CD8-positive, alpha-beta T cell (primary cell): ENCODE measurements at regions of chr10 and their contacts with region 1.

Region 1: GRCh38 chr10:32308027-32308603 is 38.8 kb downstream of the EPC1 start:
- DNase-seq: peak in 2 of 9 experiments; percentile 28 to 35
- ATAC-seq: peak; percentile 46
- H3K4me3 ChIP-seq: no peak overlapping the region
- H3K4me3 Mint-ChIP-seq: peak overlapping the region; percentile 2
- H3K27ac ChIP-seq: peak overlapping the region in 1 of 2 experiments; percentile 15
- H3K27ac Mint-ChIP-seq: peak overlapping the region; percentile 64
- H3K4me1 ChIP-seq: peaks cover 35% of the 10 kb centered on the region
- H3K4me1 Mint-ChIP-seq: peaks cover 73% of the 10 kb centered on the region
- H3K27me3 ChIP-seq: no peaks in the 10 kb centered on the region
- H3K27me3 Mint-ChIP-seq: no peaks in the 10 kb centered on the region
- CTCF ChIP-seq: no peak

Region 2: DNA sequence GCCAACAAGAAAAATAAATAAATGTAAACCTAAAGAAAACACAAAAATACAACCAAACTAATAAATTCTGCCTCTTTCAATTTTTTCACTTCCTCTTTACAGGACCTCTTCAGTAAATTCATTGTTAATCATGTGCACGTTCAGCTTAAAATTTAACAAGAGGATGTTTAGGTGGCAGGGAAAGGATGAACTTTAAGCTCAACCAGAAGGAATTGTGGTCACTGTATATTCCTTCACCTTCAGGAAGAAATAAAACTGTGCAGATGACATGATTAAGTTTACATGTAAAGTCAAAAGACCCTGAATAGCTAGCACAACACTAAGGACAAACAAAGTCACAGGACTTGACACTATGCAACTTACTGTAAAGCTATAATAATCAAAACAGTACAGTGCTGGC is 284.9 kb before region 1 on chr10:
- CTCF ChIA-PET with region 1: no interaction called
- POLR2A ChIA-PET with region 1: no interaction called
- intact Hi-C with region 1: no loop called
- DNase-seq: no peak
- ATAC-seq: no peak
- H3K4me3 ChIP-seq: no peak overlapping the region
- H3K4me3 Mint-ChIP-seq: no peak overlapping the region
- H3K27ac ChIP-seq: no peak overlapping the region
- H3K27ac Mint-ChIP-seq: peak overlapping the region; percentile 74
- H3K4me1 ChIP-seq: no peaks in the 10 kb centered on the region
- H3K4me1 Mint-ChIP-seq: peaks cover 9% of the 10 kb centered on the region
- H3K27me3 ChIP-seq: no peaks in the 10 kb centered on the region
- H3K27me3 Mint-ChIP-seq: no peaks in the 10 kb centered on the region
- CTCF ChIP-seq: no peak

Region 3: GRCh38 chr10:32338262-32338661 is 30.1 kb after region 1 on chr10:
- CTCF ChIA-PET with region 1: no interaction called
- POLR2A ChIA-PET with region 1: interaction called, 4 read pairs
- intact Hi-C with region 1: loop called in 1 of 2 experiments (anchors 5 kb)
- DNase-seq: no peak
- ATAC-seq: no peak
- H3K4me3 ChIP-seq: no peak overlapping the region
- H3K4me3 Mint-ChIP-seq: peak overlapping the region; percentile 9
- H3K27ac ChIP-seq: no peak overlapping the region
- H3K27ac Mint-ChIP-seq: peak overlapping the region; percentile 66
- H3K4me1 ChIP-seq: peaks cover 92% of the 10 kb centered on the region
- H3K4me1 Mint-ChIP-seq: peaks cover 93% of the 10 kb centered on the region
- H3K27me3 ChIP-seq: no peaks in the 10 kb centered on the region
- H3K27me3 Mint-ChIP-seq: no peaks in the 10 kb centered on the region
- CTCF ChIP-seq: no peak